ENCODE measurements at regions of chr2 and their contacts with region 1.

Region 1: GRCh38 chr2:178287652-178288344 is 93.5 kb downstream of the OSBPL6 start:
- DNase-seq: no peak
- ATAC-seq: no peak
- H3K4me3 Mint-ChIP-seq: no peak overlapping the region
- H3K27ac Mint-ChIP-seq: no peak overlapping the region
- H3K4me1 Mint-ChIP-seq: peaks cover 6% of the 10 kb centered on the region
- H3K27me3 Mint-ChIP-seq: no peaks in the 10 kb centered on the region
- CTCF ChIP-seq: no peak

Region 2: DNA sequence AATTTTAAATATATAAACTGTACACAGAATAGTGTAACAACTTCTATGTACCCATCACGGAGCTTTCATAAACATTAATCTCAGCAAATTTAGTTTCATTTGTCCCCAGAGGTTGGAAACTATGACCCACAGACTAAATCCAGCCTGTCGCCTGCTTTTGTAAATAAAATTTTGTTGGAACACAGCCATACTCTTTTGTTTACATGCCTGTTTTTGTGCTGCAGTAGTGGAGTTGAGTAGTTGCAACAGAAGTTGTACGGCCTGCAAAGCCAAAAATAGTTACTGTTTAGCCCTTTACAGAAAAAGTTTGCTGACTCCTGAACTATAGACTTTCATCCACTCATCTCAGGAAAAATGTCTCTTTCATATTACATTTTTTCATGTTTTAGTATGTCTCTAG is 135.8 kb before region 1 on chr2:
- CTCF ChIA-PET with region 1: no interaction called
- POLR2A ChIA-PET with region 1: interaction called, 11 read pairs
- DNase-seq: no peak
- ATAC-seq: no peak
- H3K4me3 Mint-ChIP-seq: no peak overlapping the region
- H3K27ac Mint-ChIP-seq: no peak overlapping the region
- H3K4me1 Mint-ChIP-seq: no peaks in the 10 kb centered on the region
- H3K27me3 Mint-ChIP-seq: peaks cover 3% of the 10 kb centered on the region; the same call in 1 of the 2 replicates
- CTCF ChIP-seq: no peak

Region 3: DNA sequence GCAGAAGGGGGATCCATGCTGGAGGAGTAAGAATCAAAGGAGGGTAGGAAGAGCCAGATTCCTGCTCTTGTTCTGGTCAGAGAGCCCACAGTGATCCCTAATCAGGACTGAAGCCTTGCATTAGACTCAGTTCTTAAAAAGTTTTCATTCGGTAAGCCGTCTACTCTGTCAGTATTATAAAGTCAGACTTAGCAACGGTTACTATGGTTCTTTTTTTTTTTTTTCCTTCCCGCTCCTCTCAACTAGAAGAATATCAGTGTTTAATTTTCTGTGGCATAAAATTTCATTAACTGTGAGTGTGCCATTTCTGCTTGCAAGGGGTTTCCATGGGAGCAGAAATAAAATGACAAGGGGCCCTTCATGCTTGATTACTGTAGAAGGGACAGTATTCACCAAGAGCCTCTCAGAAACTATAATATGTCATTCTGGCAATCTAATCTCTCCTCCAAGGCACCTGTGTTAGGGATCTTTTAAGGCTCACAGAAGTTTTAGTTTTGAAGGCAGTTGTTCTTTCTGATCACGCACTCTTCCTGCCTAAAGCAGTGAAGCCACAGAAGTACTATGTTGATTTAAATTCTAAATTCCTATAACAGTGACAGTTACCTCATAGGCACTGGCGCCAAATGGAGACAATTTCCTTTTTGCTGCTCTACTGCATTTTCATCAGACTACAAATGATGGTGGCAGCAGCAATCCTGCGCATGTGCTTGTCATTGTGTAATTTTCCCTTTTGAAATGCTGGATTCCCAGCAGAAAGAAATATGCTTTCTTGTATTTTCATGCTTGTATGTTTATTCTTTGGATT is 36.4 kb before region 1 on chr2:
- CTCF ChIA-PET with region 1: no interaction called
- POLR2A ChIA-PET with region 1: no interaction called
- DNase-seq: no peak
- ATAC-seq: no peak
- H3K4me3 Mint-ChIP-seq: no peak overlapping the region
- H3K27ac Mint-ChIP-seq: no peak overlapping the region
- H3K4me1 Mint-ChIP-seq: peaks cover 27% of the 10 kb centered on the region
- H3K27me3 Mint-ChIP-seq: no peaks in the 10 kb centered on the region
- CTCF ChIP-seq: no peak